ENCODE measurements at regions of chr2 and their contacts with region 1.

Region 1: DNA sequence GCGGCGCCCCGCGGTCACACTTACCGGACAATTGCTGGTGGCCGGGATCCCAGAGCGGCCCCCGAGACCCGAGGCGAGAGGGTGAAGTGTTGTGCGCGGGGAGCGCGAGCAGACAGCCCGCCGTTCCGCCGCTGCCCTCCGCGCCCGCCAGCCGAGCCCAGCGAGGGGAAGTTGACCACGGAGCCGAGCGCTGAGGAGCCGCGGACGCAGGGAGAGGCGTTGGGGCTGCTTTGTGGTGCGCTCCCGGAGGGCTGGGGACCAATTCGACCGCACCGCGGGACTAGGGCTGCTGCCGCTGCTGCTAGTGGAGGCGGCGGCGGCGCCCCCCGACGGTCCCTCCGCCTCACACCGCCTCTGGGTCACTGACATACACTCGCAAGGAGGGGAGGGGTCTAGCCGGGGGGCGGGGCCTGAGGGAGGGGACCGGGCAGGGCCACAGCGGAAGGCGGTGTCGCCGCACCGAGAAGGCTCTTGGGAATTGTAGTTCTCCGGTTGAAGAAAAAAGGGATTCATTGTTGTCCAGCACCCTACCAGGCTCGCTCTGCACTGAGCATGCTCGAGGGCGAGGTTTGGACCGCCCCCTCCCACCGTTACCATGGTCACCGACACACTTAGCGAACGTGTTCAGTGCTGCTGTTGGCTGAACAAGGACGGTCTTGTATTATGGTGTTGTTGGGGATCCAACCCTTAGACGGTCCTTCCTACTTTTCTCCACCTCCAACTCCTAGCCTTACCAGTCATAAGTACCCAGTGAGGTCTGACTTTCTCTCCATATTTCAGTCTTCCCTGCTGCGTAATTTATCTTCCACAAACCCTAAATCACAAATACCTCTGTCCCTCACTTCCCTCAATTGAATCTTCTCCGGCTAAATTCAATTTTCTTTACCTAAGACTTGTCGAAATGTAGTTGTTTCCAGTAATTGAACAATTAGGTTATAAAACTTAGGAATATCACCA is at the start of gene PELI1:
- DNase-seq: peak; percentile 94 to 100 (median 98)

Region 2: GRCh38 chr2:63977904-63978303 is 166.4 kb before region 1 on chr2:
- intact Hi-C with region 1: no loop called
- DNase-seq: no peak

Region 3: GRCh38 chr2:64052468-64053241 is 91.7 kb before region 1 on chr2:
- intact Hi-C with region 1: loop called (anchors 2 kb)
- DNase-seq: no peak

Region 4: GRCh38 chr2:64228126-64228678 is 83.9 kb after region 1 on chr2:
- intact Hi-C with region 1: loop called (anchors 5 kb)
- DNase-seq: peak; percentile 82 to 99 (median 89)

Region 5: DNA sequence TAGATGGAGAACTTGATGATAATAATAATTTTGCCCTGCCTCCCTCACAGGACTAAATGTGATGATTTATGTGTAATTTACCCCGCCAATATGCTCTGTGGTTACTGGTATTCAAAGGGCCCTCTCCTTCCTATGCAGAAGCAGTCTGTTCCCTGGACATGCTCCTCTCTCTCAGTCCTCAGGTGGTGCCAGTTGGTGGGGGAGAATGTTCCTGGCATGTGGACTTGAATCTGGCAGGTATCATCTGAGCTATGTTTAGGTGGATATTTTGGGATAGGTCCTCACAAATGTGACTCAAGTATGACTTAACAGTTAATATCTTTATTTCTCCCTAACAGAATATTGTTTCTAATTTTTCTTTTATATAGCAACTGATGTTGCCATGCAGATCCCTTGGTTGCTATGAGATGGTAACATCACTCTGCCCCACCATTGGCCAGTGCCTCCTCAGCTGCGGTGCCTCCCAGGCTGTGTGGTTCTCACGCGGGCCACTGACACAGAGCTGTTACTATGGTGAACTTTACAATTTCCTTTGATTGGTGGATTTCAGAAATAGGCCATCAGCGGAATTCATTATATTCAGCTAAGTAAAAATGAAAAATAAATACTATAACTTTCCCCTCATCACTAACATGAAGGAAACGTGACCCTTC is 106.5 kb after region 1 on chr2:
- intact Hi-C with region 1: no loop called
- DNase-seq: peak in 4 of 10 donors; percentile 36 to 88 (median 58)

Region 6: GRCh38 chr2:64311948-64312621 is 167.8 kb after region 1 on chr2:
- intact Hi-C with region 1: loop called (anchors 1 kb)
- DNase-seq: peak; percentile 46 to 96 (median 77)

Measured in posterior cingulate gyrus (tissue), 11 donors.